ENCODE measurements at regions of chr1 and their contacts with region 1.

Region 1: DNA sequence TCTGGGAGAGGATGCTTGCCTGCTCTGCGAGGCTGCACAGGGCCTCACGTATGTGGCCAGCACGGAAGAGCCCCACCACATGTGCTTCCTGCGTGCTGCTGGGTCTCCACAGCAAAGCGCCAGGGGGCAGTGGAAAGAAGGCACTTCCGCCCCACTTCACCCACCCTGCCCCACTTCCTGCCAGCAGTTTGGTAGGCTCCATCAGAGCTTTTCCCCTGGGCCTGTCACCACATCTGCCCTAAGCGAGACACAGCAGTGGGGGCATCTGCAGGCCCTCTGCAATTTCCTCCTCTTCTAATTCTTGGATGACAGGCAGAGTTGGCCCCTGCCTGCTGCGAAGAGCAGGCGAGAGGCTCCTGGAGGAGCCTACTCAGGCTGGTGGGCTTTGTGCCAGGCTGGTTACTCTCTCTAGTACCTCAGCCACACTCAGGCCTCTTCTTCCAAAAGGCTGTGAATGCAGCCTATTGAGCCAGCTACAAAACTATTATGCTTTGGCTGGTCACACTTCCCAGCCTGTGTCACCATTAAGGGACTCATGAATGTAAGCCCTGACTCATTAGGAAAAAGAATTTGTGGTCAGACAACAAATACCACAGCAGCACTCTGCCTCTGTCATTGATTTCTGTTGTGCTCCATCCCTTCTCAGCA is 25.0 kb downstream of the CD244 start:
- DNase-seq: peak; percentile 79
- H3K4me3 Mint-ChIP-seq: peak overlapping the region; percentile 47
- H3K27ac Mint-ChIP-seq: peak overlapping the region; percentile 94
- H3K4me1 Mint-ChIP-seq: peaks cover 61% of the 10 kb centered on the region
- H3K27me3 Mint-ChIP-seq: no peaks in the 10 kb centered on the region

Region 2: DNA sequence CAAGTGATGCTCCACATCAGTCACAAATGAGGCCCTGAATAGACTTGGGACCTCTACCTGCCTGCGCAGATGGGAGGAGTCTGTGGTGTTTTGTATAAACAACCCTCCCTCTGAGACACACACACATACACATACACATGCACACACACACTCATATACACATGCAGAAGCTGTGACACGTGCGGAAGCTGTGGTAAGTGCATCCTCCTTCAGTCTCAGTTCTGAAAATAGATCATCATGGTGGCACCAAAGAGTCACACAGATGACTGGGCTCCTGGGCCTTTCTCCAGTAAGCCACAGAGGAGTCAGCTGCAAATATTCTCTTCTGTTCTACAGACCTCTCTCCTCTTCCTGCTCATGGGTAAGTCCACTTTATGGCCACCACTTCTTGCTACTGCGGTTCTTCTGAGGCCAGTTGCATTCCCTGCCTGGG is 41.7 kb before region 1 on chr1 and contains the start of gene LY9:
- intact Hi-C with region 1: loop called (anchors 1 kb)
- DNase-seq: peak; percentile 76
- H3K4me3 Mint-ChIP-seq: peak within 1 kb of the TSS; percentile 73
- H3K27ac Mint-ChIP-seq: peak within 1 kb of the TSS; percentile 77
- H3K4me1 Mint-ChIP-seq: peaks cover 67% of the 10 kb centered on the region
- H3K27me3 Mint-ChIP-seq: peaks cover 14% of the 10 kb centered on the region
- total RNA-seq, gene LY9: 0.49 and 0.71 TPM in 2 replicates

Region 3: DNA sequence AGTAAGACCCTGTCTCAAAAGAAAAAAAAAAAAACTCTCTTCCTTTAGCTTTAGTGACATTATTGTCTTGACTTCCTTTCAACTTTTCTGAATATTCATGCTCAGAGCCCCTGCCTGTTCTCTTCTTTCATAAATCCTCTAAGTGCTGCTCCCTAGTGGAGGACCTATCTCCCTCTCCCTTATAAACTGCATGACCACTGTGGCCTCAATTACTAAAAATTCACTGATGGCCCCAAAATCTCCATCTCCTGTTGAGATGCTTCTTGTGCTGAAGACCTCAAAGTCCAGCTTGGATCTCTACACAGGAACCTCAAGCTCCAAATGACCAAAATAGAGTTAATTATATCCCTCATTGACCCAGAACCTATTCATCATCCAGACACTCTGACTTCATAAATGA is 39.5 kb after region 1 on chr1:
- intact Hi-C with region 1: loop called (anchors 1 kb)
- DNase-seq: no peak
- H3K4me3 Mint-ChIP-seq: no peak overlapping the region
- H3K27ac Mint-ChIP-seq: no peak overlapping the region
- H3K4me1 Mint-ChIP-seq: peaks cover 16% of the 10 kb centered on the region
- H3K27me3 Mint-ChIP-seq: no peaks in the 10 kb centered on the region

Region 4: DNA sequence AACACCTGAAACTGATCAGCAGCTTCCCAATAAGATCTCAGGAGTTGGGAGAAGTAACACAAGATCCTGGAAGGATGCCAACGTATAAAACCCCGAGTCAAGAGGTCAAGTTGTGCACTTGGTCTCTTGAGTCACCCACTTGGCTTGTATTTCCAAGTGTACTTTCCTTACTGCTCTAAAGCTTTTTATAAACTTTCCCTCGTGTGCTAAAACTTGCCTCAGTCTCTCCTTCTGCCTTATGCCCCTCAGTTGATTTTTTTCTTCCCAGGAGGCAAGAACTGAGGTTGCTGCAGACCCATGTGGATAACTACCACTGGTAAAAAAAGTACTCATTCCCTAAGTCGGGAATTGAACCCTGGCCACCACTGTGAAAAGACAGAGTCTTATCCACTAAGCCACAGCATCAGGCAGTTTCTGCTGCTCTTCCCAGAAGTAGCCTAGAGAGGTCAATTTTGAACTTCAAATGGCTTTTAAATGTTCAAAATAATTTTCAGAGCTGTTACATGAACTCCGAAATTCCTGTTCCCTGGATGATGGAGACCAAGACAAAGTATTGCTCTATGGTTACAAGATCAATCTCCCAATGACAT is 88.1 kb after region 1 on chr1:
- intact Hi-C with region 1: no loop called
- DNase-seq: no peak
- H3K4me3 Mint-ChIP-seq: no peak overlapping the region
- H3K27ac Mint-ChIP-seq: no peak overlapping the region
- H3K4me1 Mint-ChIP-seq: no peaks in the 10 kb centered on the region
- H3K27me3 Mint-ChIP-seq: peaks cover 19% of the 10 kb centered on the region

Region 5: GRCh38 chr1:160951443-160952128 is 113.9 kb after region 1 on chr1:
- intact Hi-C with region 1: loop called (anchors 1 kb)
- DNase-seq: peak; percentile 52
- H3K4me3 Mint-ChIP-seq: no peak overlapping the region
- H3K27ac Mint-ChIP-seq: no peak overlapping the region
- H3K4me1 Mint-ChIP-seq: peaks cover 11% of the 10 kb centered on the region
- H3K27me3 Mint-ChIP-seq: peaks cover 6% of the 10 kb centered on the region

Region 6: DNA sequence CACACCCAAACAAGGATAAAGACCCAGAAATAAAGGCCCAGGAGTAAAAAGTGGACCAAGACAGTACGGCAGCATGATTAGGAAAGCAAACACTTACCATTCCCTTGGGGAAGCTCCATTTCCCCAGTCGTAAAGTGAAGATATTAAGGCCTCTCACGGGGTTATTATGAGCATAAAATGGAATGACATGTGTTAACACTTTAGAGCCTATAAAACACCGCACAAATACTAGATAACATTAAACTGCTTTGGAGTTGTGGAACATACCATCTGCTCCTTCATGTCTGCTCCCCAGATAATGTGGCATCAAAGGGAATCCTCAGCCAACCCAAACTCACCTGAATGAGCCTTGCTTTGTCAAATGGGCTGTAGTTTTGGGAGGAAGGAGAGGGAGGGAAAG is 125.8 kb after region 1 on chr1:
- intact Hi-C with region 1: no loop called
- DNase-seq: no peak
- H3K4me3 Mint-ChIP-seq: no peak overlapping the region
- H3K27ac Mint-ChIP-seq: no peak overlapping the region
- H3K4me1 Mint-ChIP-seq: no peaks in the 10 kb centered on the region
- H3K27me3 Mint-ChIP-seq: peaks cover 5% of the 10 kb centered on the region